ENCODE measurements at regions of chrX and their contacts with region 1.

Region 1: DNA sequence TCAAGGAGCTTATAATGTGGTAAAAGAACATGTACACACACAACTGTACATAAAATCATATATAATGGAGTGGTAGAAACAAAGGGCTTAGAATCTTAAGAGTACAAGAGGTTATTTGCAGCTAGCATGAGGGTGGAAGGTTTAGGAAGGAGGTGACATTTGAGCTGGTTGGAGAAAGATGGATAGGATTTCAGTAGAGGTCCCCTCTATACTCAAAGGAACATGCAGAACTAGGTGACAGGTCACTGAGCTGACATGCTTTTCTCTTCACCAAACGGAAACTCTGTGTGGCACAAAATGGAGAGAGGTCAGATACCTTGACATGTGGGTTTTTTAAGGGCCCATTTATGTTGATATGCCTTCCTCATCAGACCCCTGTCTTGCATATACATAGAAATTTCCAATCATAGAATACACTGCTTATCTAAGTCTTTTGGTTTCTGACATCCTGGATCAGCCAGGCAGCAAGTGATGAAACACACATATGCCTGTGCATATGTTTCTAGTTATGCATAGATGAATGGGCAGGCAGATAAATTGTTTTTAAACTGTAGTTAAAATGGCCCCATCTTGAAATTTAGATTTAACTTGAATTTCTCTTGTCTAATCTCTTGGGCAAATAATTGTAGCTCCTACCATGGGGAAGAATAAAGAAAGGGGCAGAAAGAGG is 29.3 kb downstream of the CLCN5 start:
- DNase-seq: no peak
- H3K4me3 ChIP-seq: no peak overlapping the region
- H3K27ac ChIP-seq: no peak overlapping the region
- H3K4me1 ChIP-seq: no peaks in the 10 kb centered on the region
- H3K27me3 ChIP-seq: no peaks in the 10 kb centered on the region
- CTCF ChIP-seq: no peak

Region 2: DNA sequence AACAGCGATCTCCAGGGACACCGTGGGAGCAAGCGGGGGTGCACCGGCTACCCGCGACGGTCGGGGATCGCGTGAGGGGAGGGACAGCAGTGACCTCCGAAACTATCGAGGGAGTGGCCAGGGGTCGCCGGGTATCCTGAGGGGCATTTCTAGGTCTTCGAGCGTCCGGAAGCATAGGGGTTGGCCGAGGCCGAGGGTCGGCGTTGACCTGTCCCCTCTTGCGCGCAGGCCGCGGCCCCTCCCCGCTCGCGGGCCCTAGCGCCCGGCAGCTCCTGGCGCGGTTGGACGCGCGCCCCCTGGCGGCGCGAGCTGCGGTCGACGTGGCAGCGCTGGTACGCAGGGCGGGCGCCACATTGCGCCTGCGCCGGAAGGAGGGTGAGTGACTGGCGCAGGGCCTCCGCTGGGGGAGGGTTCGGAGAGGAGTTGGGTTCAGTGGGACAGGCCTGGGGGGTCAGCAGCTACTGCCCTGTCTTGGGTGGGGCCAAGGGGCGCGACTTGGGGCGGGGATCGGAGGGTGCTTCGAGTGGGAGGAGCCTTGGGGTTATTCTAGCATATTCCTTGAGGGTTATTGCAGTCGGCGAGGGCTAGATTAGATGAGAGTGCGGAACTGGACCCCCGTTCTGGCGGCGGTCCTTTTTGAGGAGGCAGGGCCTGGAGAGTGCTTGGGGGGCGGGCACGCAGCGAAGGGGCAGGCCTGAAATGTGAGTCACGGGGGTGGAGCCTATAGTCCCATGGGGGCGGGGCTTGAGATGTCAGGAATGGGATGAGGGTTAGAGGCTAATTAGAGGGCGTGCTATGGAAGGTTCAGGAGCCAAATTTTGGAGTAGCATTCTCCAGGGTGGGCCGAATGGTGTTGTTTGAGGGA is 787.9 kb before region 1 on chrX:
- intact Hi-C with region 1: loop called (anchors 5 kb)
- DNase-seq: peak; percentile 90 to 93
- H3K4me3 ChIP-seq: peak overlapping the region; percentile 50 to 53
- H3K27ac ChIP-seq: peak overlapping the region; percentile 90 to 97
- H3K4me1 ChIP-seq: peaks cover 0 to 22% (median 9%) of the 10 kb centered on the region in 4 donors
- H3K27me3 ChIP-seq: no peaks in the 10 kb centered on the region
- CTCF ChIP-seq: peak; percentile 63 to 89

Region 3: GRCh38 chrX:49838374-49838773 is 113.3 kb before region 1 on chrX:
- intact Hi-C with region 1: no loop called
- DNase-seq: no peak
- H3K4me3 ChIP-seq: no peak overlapping the region
- H3K27ac ChIP-seq: no peak overlapping the region
- H3K4me1 ChIP-seq: no peaks in the 10 kb centered on the region
- H3K27me3 ChIP-seq: no peaks in the 10 kb centered on the region
- CTCF ChIP-seq: peak; percentile 21 to 38

Region 4: GRCh38 chrX:50180073-50180940 is 228.6 kb after region 1 on chrX:
- intact Hi-C with region 1: no loop called
- DNase-seq: no peak
- H3K4me3 ChIP-seq: no peak overlapping the region
- H3K27ac ChIP-seq: no peak overlapping the region
- H3K4me1 ChIP-seq: no peaks in the 10 kb centered on the region
- H3K27me3 ChIP-seq: no peaks in the 10 kb centered on the region
- CTCF ChIP-seq: no peak

Measured in tibial artery (tissue), 4 donors.